ENCODE measurements at regions of chr21 and their contacts with region 1.

Region 1: GRCh38 chr21:33931799-33932390 is 16.3 kb upstream of the ATP5PO start:
- DNase-seq: no peak
- H3K4me3 ChIP-seq: peak overlapping the region; percentile 63 to 69
- H3K4me3 Mint-ChIP-seq: peak overlapping the region; percentile 94 to 99 (median 99)
- H3K27ac ChIP-seq: peak overlapping the region; percentile 88
- H3K27ac Mint-ChIP-seq: peak overlapping the region; percentile 95 to 100 (median 99)
- H3K4me1 ChIP-seq: peaks cover 49% of the 10 kb centered on the region
- H3K4me1 Mint-ChIP-seq: peaks cover 24 to 54% (median 36%) of the 10 kb centered on the region in 4 donors
- H3K27me3 ChIP-seq: no peaks in the 10 kb centered on the region
- H3K27me3 Mint-ChIP-seq: no peaks in the 10 kb centered on the region

Region 2: DNA sequence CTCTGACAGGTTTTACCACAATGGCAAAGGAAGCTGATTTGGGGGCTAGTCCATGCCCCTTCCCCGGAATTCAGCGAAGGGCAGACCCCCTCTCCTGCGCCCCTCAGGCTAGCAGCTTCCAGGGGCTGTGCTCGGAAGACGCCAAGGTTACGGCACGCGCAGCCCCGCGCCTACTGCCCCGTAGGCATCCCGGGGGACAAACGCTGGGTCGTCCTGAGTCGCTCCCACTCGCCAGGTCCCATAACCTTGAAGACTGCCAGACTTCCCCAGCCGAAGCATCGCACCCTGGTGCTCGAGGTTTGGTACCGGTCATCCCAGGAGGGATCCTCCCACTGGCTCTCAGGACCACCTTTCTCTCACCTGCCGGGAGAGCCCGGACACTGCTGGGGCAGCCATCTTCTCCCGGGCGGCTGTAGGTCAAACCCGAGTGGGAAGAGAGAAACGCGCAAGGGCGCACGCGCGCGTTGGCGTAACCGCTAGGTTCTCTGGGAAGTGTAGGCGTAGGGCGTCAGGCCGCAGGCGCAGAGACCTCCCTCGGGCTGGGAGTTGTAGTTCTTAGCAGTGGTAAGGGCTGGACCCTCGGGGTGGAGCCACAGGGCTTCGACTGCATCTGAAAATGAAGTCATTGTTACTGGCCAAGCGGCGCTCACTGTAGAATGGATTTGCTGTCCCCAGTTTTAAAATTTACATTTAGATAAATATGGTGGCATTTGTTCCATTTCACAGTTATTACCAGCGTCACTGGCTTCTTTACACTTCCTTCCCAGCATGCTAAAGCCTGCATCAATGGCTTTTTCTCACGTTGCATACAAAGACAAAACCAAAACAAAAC is 16.3 kb before region 1 on chr21 and contains the start of gene ATP5PO:
- CTCF ChIA-PET with region 1: no interaction called
- POLR2A ChIA-PET with region 1: interaction called, 6 read pairs
- intact Hi-C with region 1: loop called (anchors 2 kb)
- DNase-seq: peak; percentile 94 to 96 (median 94)
- H3K4me3 ChIP-seq: peak within 1 kb of the TSS; percentile 90
- H3K4me3 Mint-ChIP-seq: peak within 1 kb of the TSS; percentile 97 to 99 (median 98)
- H3K27ac ChIP-seq: peak within 1 kb of the TSS; percentile 91
- H3K27ac Mint-ChIP-seq: peak within 1 kb of the TSS; percentile 92 to 99 (median 99)
- H3K4me1 ChIP-seq: peaks cover 35% of the 10 kb centered on the region
- H3K4me1 Mint-ChIP-seq: peaks cover 17 to 34% (median 28%) of the 10 kb centered on the region in 4 donors
- H3K27me3 ChIP-seq: no peaks in the 10 kb centered on the region
- H3K27me3 Mint-ChIP-seq: no peaks in the 10 kb centered on the region
- total RNA-seq, gene ATP5PO: 126 to 143 TPM

Region 3: DNA sequence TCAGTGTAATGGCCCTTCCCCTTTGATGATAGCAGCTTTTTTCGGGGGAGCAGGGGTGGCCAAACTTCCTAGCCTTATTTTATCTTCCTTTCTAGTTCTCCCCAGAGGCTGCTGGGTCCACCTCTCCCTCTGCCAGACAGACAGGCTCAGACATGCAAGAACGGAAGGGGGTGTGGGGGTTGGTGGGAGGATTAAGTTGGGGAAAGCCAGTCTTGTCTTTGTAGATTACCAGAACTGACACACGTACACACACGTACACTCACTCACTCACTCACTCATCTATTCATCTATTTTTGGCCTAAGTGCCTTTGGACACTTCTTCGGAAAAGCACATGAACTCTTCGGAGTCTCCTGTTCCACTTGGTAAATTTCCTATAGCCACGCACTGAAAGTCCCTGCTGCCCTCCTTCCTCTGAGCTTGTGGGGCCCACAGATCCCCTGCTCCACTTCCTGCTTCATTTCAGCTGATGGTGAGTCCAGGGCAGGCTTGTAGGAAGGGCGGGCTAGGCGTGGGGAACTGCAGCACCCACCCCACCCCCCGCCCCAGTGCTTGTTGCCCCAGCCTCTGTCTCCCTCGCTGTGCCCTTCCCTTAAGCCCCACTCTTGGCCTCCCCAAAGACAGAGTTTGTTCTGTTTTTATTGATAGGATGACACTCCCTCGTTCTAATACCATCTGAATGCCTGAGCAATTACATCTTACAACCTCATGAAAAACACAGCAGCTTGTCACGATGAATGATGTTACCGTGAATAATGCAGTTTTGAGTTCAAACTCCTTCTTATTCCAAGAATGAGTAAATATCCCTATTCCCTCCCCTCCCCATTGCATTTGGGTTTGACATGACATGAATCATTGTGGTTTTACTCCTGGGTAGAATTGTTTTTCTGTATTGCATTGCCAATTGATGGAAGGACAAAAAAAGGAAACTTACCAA is 44.5 kb after region 1 on chr21:
- CTCF ChIA-PET with region 1: no interaction called
- POLR2A ChIA-PET with region 1: interaction called, 26 read pairs
- intact Hi-C with region 1: no loop called
- DNase-seq: peak; percentile 21 to 80 (median 29)
- H3K4me3 ChIP-seq: peak overlapping the region; percentile 0 to 7
- H3K4me3 Mint-ChIP-seq: peak overlapping the region; percentile 41 to 83 (median 66)
- H3K27ac ChIP-seq: peak overlapping the region; percentile 58
- H3K27ac Mint-ChIP-seq: peak overlapping the region; percentile 67 to 98 (median 94)
- H3K4me1 ChIP-seq: peaks cover 33% of the 10 kb centered on the region
- H3K4me1 Mint-ChIP-seq: peaks cover 37 to 58% (median 48%) of the 10 kb centered on the region in 4 donors
- H3K27me3 ChIP-seq: no peaks in the 10 kb centered on the region
- H3K27me3 Mint-ChIP-seq: no peaks in the 10 kb centered on the region

Region 4: DNA sequence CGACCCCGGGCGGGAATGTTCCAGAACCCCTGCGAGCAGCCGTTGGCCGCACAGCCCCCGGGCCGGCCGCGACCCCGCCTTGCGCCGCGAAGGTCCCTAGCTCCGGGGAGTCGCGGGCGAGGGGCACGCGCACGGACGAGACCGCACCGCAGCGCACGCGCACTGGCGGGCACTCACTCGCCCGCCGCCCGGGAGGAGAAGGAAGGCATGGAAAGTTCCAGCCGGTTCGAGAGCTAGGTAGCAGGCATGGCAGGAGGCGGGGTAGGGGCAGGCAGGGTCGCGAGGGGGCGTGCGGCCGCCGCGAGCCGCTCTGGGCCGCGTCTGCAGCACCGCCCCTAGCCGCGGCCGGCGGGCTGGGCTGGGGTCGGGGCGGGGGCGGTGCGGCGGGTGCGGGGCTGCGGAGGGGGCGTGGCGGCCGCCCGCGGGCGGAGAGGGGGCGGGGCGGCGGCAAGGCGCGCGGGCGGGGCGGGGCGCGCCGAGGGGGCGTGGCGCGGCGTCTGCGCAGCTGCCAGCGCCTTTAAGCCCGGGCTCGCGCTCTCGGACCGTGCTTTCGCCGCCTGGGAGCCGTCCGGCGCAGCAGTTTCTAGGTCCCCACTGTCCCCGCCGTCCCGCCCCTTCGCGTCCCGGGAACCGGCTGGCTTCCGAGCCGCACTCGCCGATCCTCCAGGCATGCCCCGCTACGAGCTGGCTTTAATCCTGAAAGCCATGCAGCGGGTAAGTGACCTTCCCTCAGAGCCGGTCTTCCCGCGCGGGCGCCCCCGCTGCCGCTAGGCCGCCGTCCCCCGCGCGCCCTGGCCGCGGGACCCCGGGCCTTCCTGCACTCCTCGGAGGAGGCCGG is 141.4 kb after region 1 on chr21 and contains the starts of genes MRPS6 and SLC5A3:
- CTCF ChIA-PET with region 1: interaction called, 3 read pairs
- POLR2A ChIA-PET with region 1: interaction called, 66 read pairs
- intact Hi-C with region 1: no loop called
- DNase-seq: peak; percentile 68 to 78 (median 69)
- H3K4me3 ChIP-seq: peak within 1 kb of the TSS; percentile 37 to 66
- H3K4me3 Mint-ChIP-seq: peak within 1 kb of the TSS; percentile 89 to 97 (median 94)
- H3K27ac ChIP-seq: peak within 1 kb of the TSS; percentile 68
- H3K27ac Mint-ChIP-seq: peak within 1 kb of the TSS; percentile 91 to 97 (median 93)
- H3K4me1 ChIP-seq: peaks cover 39% of the 10 kb centered on the region
- H3K4me1 Mint-ChIP-seq: peaks cover 36 to 54% (median 45%) of the 10 kb centered on the region in 4 donors
- H3K27me3 ChIP-seq: no peaks in the 10 kb centered on the region
- H3K27me3 Mint-ChIP-seq: no peaks in the 10 kb centered on the region
- total RNA-seq, gene MRPS6: 76.9 to 80.1 TPM
- total RNA-seq, gene SLC5A3: 32.8 to 33.4 TPM

Region 5: DNA sequence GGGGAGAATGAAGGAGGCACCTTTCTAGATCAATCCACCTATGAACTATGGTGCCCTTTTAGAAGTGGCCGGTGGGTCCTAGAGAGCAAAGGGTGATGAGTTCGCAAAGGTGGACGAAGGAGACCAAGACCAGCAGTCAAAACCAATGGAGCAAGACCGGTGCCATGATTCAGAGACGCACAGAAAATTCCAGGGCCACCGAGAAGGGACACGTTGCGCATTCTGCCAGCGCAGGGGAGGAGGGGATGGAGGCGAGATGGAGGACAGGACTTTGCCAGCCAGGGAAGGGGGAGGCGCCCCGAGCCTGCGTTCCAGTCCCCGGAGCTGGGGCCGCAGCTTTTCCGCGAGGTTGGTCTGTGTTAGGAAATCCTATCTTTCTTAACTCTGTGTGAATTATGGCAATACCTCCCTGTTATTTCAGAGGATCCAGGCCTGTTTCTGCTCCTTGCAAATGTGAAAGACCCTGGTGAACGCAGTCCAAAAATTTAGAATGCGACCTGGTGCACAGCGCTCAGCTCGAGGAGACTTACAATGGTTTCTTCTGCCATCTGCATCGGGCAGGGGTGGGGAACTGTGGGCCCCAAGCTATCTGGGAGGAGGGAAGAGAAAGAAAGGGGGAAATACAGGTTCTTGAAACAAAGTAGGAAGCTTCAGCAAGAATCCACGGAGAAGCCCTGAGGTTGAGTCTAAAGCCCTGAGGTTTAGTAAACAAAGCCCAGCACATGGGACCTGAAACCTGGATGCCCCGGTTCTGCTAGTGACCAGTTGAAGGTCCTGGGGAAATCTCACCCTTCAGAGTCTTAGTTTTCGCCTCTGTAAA is 270.9 kb after region 1 on chr21:
- CTCF ChIA-PET with region 1: interaction called, 12 read pairs
- POLR2A ChIA-PET with region 1: interaction called, 6 read pairs
- intact Hi-C with region 1: no loop called
- DNase-seq: no peak
- H3K4me3 ChIP-seq: no peak overlapping the region
- H3K4me3 Mint-ChIP-seq: peak overlapping the region; percentile 46 to 87 (median 80)
- H3K27ac ChIP-seq: no peak overlapping the region
- H3K27ac Mint-ChIP-seq: peak overlapping the region in 2 of 7 donors; percentile 31 to 52
- H3K4me1 ChIP-seq: peaks cover 32% of the 10 kb centered on the region
- H3K4me1 Mint-ChIP-seq: peaks cover 32 to 50% (median 36%) of the 10 kb centered on the region in 4 donors
- H3K27me3 ChIP-seq: no peaks in the 10 kb centered on the region
- H3K27me3 Mint-ChIP-seq: no peaks in the 10 kb centered on the region

Measured in CD4-positive, alpha-beta memory T cell (primary cell).